CD8-positive, alpha-beta memory T cell (primary cell): ENCODE measurements at regions of chr7 and their contacts with region 1.

Region 1: GRCh38 chr7:25259587-25260243 is 31.4 kb upstream of the NPVF start:
- DNase-seq: peak; percentile 15 to 73 (median 51)
- H3K4me3 ChIP-seq: no peak overlapping the region
- H3K4me3 Mint-ChIP-seq: peak overlapping the region in 2 of 7 donors; percentile 27 to 52
- H3K27ac ChIP-seq: no peak overlapping the region
- H3K27ac Mint-ChIP-seq: no peak overlapping the region
- H3K4me1 ChIP-seq: peaks cover 25% of the 10 kb centered on the region
- H3K4me1 Mint-ChIP-seq: peaks cover 21 to 27% (median 25%) of the 10 kb centered on the region in 3 donors
- H3K27me3 ChIP-seq: no peaks in the 10 kb centered on the region
- H3K27me3 Mint-ChIP-seq: peaks cover 13% of the 10 kb centered on the region in 2 donors

Region 2: GRCh38 chr7:25272265-25272664 is 12.6 kb after region 1 on chr7:
- CTCF ChIA-PET with region 1: no interaction called
- POLR2A ChIA-PET with region 1: interaction called, 13 read pairs
- DNase-seq: no peak
- H3K4me3 ChIP-seq: no peak overlapping the region
- H3K4me3 Mint-ChIP-seq: no peak overlapping the region
- H3K27ac ChIP-seq: no peak overlapping the region
- H3K27ac Mint-ChIP-seq: no peak overlapping the region
- H3K4me1 ChIP-seq: no peaks in the 10 kb centered on the region
- H3K4me1 Mint-ChIP-seq: no peaks in the 10 kb centered on the region
- H3K27me3 ChIP-seq: no peaks in the 10 kb centered on the region
- H3K27me3 Mint-ChIP-seq: peaks cover 10 to 22% of the 10 kb centered on the region in 2 donors

Region 3: GRCh38 chr7:25565949-25566348 is 306.2 kb after region 1 on chr7:
- CTCF ChIA-PET with region 1: interaction called, 42 read pairs
- POLR2A ChIA-PET with region 1: no interaction called
- DNase-seq: peak; percentile 30 to 65 (median 44)
- H3K4me3 ChIP-seq: no peak overlapping the region
- H3K4me3 Mint-ChIP-seq: peak overlapping the region in 1 of 7 donors; percentile 44
- H3K27ac ChIP-seq: no peak overlapping the region
- H3K27ac Mint-ChIP-seq: peak overlapping the region in 1 of 8 donors; percentile 7
- H3K4me1 ChIP-seq: no peaks in the 10 kb centered on the region
- H3K4me1 Mint-ChIP-seq: peaks cover 2 to 4% (median 3%) of the 10 kb centered on the region in 3 donors
- H3K27me3 ChIP-seq: no peaks in the 10 kb centered on the region
- H3K27me3 Mint-ChIP-seq: peaks cover 6 to 10% of the 10 kb centered on the region in 2 donors